ENCODE measurements at regions of chr5 and their contacts with region 1.

Region 1: GRCh38 chr5:39986618-39987017 is 561.8 kb upstream of the DAB2 start:
- DNase-seq: no peak
- H3K4me3 ChIP-seq: no peak overlapping the region
- H3K27ac ChIP-seq: no peak overlapping the region
- H3K4me1 ChIP-seq: no peaks in the 10 kb centered on the region
- H3K27me3 ChIP-seq: no peaks in the 10 kb centered on the region
- CTCF ChIP-seq: no peak
- POLR2A ChIP-seq: no peak

Region 2: DNA sequence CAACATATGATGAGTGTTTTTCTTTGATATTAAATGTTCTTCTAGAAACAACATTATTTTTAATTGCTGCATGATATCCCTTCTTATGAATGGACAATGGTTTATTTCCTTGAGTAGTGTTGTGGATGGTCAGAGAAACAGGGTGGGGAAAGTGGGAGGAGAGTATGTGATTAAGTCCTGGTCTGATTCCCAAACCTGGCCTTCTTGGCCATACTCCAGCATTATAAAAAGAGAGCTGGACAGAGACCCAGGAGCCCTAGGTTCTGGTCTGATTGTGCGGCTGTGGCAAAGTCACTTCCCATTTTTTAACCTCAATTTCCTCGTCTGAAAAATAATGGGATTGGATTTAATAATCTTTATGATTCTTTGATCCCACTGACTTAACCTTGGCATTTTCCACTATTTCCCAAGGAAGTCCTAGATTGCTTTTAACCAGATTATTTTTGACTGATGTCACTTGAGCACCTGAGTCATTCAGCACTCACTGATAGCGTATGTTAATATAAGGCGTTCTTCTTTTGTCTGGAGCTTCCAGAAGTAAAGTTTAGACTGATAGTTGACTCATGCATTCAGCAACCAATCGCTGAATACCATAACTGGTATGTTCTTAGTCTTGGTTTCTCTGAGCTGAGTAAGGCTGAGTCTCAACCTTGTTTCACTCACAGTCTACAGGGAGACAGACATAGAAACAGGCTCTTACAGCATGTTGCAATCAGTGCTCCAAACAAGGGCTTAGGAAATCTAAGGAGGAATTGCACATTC is 1114.6 kb before region 1 on chr5:
- intact Hi-C with region 1: loop called (anchors 10 kb)
- DNase-seq: no peak
- H3K4me3 ChIP-seq: no peak overlapping the region
- H3K27ac ChIP-seq: no peak overlapping the region
- H3K4me1 ChIP-seq: no peaks in the 10 kb centered on the region
- H3K27me3 ChIP-seq: no peaks in the 10 kb centered on the region
- CTCF ChIP-seq: no peak
- POLR2A ChIP-seq: no peak

Region 3: GRCh38 chr5:40025586-40025985 is 39.0 kb after region 1 on chr5:
- intact Hi-C with region 1: loop called (anchors 1 kb)
- DNase-seq: no peak
- H3K4me3 ChIP-seq: no peak overlapping the region
- H3K27ac ChIP-seq: no peak overlapping the region
- H3K4me1 ChIP-seq: no peaks in the 10 kb centered on the region
- H3K27me3 ChIP-seq: no peaks in the 10 kb centered on the region
- CTCF ChIP-seq: no peak
- POLR2A ChIP-seq: no peak